Colonic mucosa (tissue), 4 donors: ENCODE measurements at regions of chr11 and their contacts with region 1.

Region 1: GRCh38 chr11:3775736-3776406 is 21.5 kb downstream of the NUP98 start:
- DNase-seq: no peak
- H3K4me3 ChIP-seq: no peak overlapping the region
- H3K27ac ChIP-seq: no peak overlapping the region
- H3K4me1 ChIP-seq: no peaks in the 10 kb centered on the region
- H3K27me3 ChIP-seq: no peaks in the 10 kb centered on the region
- CTCF ChIP-seq: no peak

Region 2: GRCh38 chr11:3709977-3710376 is 65.9 kb before region 1 on chr11:
- intact Hi-C with region 1: loop called (anchors 10 kb)
- DNase-seq: no peak
- H3K4me3 ChIP-seq: no peak overlapping the region
- H3K27ac ChIP-seq: no peak overlapping the region
- H3K4me1 ChIP-seq: no peaks in the 10 kb centered on the region
- H3K27me3 ChIP-seq: no peaks in the 10 kb centered on the region
- CTCF ChIP-seq: no peak

Region 3: GRCh38 chr11:3735827-3736226 is 40.0 kb before region 1 on chr11:
- intact Hi-C with region 1: no loop called
- DNase-seq: no peak
- H3K4me3 ChIP-seq: no peak overlapping the region
- H3K27ac ChIP-seq: no peak overlapping the region
- H3K4me1 ChIP-seq: no peaks in the 10 kb centered on the region
- H3K27me3 ChIP-seq: no peaks in the 10 kb centered on the region
- CTCF ChIP-seq: no peak